Activated CD4-positive, alpha-beta T cell treated with anti-CD3 and anti-CD28 coated beads for 36 hours (primary cell): ENCODE measurements at regions of chr17 and their contacts with region 1.

Region 1: GRCh38 chr17:67400193-67400592 is 23.1 kb downstream of the PITPNC1 start:
- DNase-seq: no peak
- ATAC-seq: no peak
- H3K4me3 Mint-ChIP-seq: peak overlapping the region; percentile 66
- H3K27ac Mint-ChIP-seq: peak overlapping the region; percentile 95
- H3K4me1 Mint-ChIP-seq: peaks cover 72% of the 10 kb centered on the region
- H3K27me3 Mint-ChIP-seq: no peaks in the 10 kb centered on the region

Region 2: DNA sequence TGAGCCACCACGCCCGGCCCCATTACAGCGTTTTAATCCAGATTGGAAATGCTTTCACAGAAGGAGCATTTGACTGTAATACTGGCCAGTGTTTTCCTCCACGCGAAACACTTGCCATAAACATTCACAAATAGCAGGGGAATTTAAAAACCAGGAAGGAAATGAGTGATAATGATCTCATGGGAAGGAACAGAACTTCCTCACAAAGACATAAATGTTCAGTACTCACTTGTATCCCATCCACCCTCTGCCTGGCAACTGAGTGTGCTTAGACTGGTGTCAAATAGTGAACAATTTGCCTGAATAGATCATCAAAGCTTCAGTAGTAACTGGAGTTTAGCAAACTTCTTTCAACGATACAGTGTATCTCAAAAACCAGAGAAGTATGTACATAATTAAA is 87.9 kb before region 1 on chr17:
- CTCF ChIA-PET with region 1: no interaction called
- POLR2A ChIA-PET with region 1: no interaction called
- intact Hi-C with region 1: no loop called
- DNase-seq: no peak
- ATAC-seq: no peak
- H3K4me3 Mint-ChIP-seq: no peak overlapping the region
- H3K27ac Mint-ChIP-seq: no peak overlapping the region
- H3K4me1 Mint-ChIP-seq: no peaks in the 10 kb centered on the region
- H3K27me3 Mint-ChIP-seq: no peaks in the 10 kb centered on the region

Region 3: GRCh38 chr17:67421869-67422273 is 21.7 kb after region 1 on chr17:
- CTCF ChIA-PET with region 1: interaction called, 8 read pairs
- POLR2A ChIA-PET with region 1: interaction called, 9 read pairs
- intact Hi-C with region 1: loop called (anchors 2 kb)
- DNase-seq: peak; percentile 70
- ATAC-seq: peak; percentile 96
- H3K4me3 Mint-ChIP-seq: peak overlapping the region; percentile 20
- H3K27ac Mint-ChIP-seq: peak overlapping the region; percentile 88
- H3K4me1 Mint-ChIP-seq: peaks cover 75% of the 10 kb centered on the region
- H3K27me3 Mint-ChIP-seq: no peaks in the 10 kb centered on the region